PC-3 (cell line): ENCODE measurements at regions of chr15 and their contacts with region 1.

Region 1: GRCh38 chr15:99213187-99213811 is 36.1 kb downstream of the TTC23 start:
- DNase-seq: peak; percentile 78
- ATAC-seq: peak; percentile 79
- H3K4me3 ChIP-seq: no peak overlapping the region
- H3K27ac ChIP-seq: no peak overlapping the region
- H3K4me1 ChIP-seq: no peaks in the 10 kb centered on the region
- H3K27me3 ChIP-seq: no peaks in the 10 kb centered on the region
- CTCF ChIP-seq: peak; percentile 92

Region 2: GRCh38 chr15:99104788-99105513 is 108.3 kb before region 1 on chr15 and contains the start of gene SYNM:
- CTCF ChIA-PET with region 1: interaction called, 4 read pairs
- POLR2A ChIA-PET with region 1: no interaction called
- intact Hi-C with region 1: loop called (anchors 1 kb)
- DNase-seq: peak; percentile 89
- ATAC-seq: peak; percentile 87
- H3K4me3 ChIP-seq: peak within 1 kb of the TSS; percentile 79
- H3K27ac ChIP-seq: no peak within 1 kb of the TSS
- H3K4me1 ChIP-seq: peaks cover 15% of the 10 kb centered on the region; the same call in 1 of the 2 replicates
- H3K27me3 ChIP-seq: no peaks in the 10 kb centered on the region
- CTCF ChIP-seq: peak; percentile 79
- total RNA-seq, gene SYNM: 9.9 and 15.6 TPM in 2 replicates

Region 3: DNA sequence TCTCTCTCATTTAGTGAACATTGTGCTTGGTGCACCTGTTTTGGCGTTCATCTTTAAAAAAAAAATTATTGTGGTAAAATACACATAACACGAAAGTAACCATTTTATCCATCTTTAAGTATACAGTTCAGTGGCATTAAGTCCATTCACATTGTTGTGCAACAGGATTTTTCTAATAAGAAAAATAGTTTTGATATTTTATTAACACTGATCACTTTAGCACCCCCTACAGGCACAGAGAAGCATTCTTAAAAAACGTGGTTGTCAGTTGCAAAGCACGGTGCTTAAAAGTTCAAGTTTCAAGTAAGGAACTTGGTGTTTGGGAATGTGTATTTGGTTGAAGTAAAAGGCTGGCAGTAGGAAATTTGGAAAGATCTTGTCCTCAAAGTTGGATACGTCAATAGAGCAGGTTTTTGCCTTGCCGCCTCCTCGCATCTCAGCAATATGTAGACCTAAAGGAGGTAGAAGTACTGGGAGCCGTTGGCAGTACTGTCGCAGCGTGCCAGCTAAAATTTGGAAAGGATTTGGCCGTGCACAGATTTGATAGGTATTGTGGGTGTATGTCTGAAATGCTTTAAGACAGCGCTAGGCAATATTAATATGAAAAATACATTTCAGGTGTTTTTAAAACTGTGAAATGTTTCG is 148.4 kb after region 1 on chr15:
- CTCF ChIA-PET with region 1: no interaction called
- POLR2A ChIA-PET with region 1: no interaction called
- intact Hi-C with region 1: no loop called
- DNase-seq: peak; percentile 51
- ATAC-seq: no peak
- H3K4me3 ChIP-seq: no peak overlapping the region
- H3K27ac ChIP-seq: no peak overlapping the region
- H3K4me1 ChIP-seq: no peaks in the 10 kb centered on the region
- H3K27me3 ChIP-seq: no peaks in the 10 kb centered on the region
- CTCF ChIP-seq: peak; percentile 74